Psoas muscle (tissue), 8 donors: ENCODE measurements at regions of chr17 and their contacts with region 1.

Region 1: GRCh38 chr17:69523244-69523861 is 108.9 kb downstream of the MAP2K6 start:
- DNase-seq: no peak
- ATAC-seq: peak; percentile 61 to 80 (median 68)
- H3K4me3 ChIP-seq: peak overlapping the region; percentile 3
- H3K27ac ChIP-seq: peak overlapping the region; percentile 77
- H3K4me1 ChIP-seq: peaks cover 17% of the 10 kb centered on the region
- H3K27me3 ChIP-seq: no peaks in the 10 kb centered on the region
- CTCF ChIP-seq: peak; percentile 79

Region 2: GRCh38 chr17:69327060-69327831 is 196.1 kb before region 1 on chr17 and contains the start of gene ABCA5:
- intact Hi-C with region 1: loop called in 1 of 2 experiments (anchors 5 kb)
- DNase-seq: peak; percentile 89 to 93
- ATAC-seq: peak; percentile 92 to 98 (median 96)
- H3K4me3 ChIP-seq: peak within 1 kb of the TSS; percentile 90
- H3K27ac ChIP-seq: peak within 1 kb of the TSS; percentile 97
- H3K4me1 ChIP-seq: peaks cover 27% of the 10 kb centered on the region
- H3K27me3 ChIP-seq: no peaks in the 10 kb centered on the region
- CTCF ChIP-seq: no peak
- total RNA-seq, gene ABCA5: 54.9 to 81.5 (median 75.0) TPM

Region 3: GRCh38 chr17:69335058-69335457 is 188.3 kb before region 1 on chr17:
- intact Hi-C with region 1: loop called in 1 of 2 experiments (anchors 1 kb)
- DNase-seq: no peak
- ATAC-seq: peak; percentile 78 to 90 (median 84)
- H3K4me3 ChIP-seq: peak overlapping the region; percentile 20
- H3K27ac ChIP-seq: peak overlapping the region; percentile 20
- H3K4me1 ChIP-seq: peaks cover under 1% of the 10 kb centered on the region
- H3K27me3 ChIP-seq: no peaks in the 10 kb centered on the region
- CTCF ChIP-seq: peak; percentile 76

Region 4: GRCh38 chr17:69430488-69430887 is 92.9 kb before region 1 on chr17:
- intact Hi-C with region 1: no loop called
- DNase-seq: no peak
- ATAC-seq: no peak
- H3K4me3 ChIP-seq: no peak overlapping the region
- H3K27ac ChIP-seq: peak overlapping the region; percentile 19
- H3K4me1 ChIP-seq: peaks cover 30% of the 10 kb centered on the region
- H3K27me3 ChIP-seq: no peaks in the 10 kb centered on the region
- CTCF ChIP-seq: no peak

Region 5: DNA sequence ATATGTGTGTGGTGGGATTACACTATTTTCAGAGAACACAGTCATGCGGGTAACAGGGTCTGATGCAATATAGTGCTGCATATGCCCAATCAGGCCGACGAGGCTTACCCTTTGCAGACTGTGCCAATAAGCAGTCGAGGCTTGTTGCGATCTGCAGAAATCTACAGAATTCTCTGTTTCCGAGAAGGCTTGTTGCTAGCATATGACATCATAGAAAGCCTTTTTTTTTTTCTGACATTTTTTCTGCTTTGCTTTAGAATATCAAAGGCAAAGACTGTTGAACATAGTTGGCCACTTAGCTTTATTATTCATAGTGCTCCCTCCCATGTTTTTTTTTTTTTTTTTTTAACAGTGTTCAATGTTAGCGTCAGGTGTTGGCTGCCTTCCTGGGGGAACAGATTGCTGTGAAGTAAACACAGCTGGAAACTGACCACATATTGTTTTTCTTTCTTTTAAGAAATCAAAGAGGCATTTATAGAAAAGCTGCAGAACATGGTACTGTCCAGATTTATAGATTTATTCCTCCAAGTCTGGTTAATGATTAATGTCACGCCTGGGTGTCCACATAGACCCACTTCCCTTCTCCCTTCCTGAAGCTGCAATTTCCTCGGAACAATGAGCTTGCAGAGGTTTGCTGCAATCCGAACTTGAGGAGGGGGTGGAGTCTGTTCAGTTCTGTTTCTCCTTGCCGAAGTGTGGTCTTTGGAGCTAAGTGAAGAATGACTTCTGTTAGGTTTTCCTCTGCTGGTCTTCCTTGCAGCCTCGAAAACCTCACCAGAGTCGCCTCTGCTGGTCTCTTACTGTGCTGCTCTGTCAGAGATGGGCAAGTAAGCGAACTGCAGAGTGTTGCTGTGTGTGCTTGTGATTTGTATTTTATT is 21.5 kb before region 1 on chr17:
- intact Hi-C with region 1: no loop called
- DNase-seq: peak in 1 of 2 donors; percentile 34
- ATAC-seq: peak; percentile 67 to 81 (median 75)
- H3K4me3 ChIP-seq: peak overlapping the region; percentile 64
- H3K27ac ChIP-seq: peak overlapping the region; percentile 87
- H3K4me1 ChIP-seq: peaks cover 68% of the 10 kb centered on the region
- H3K27me3 ChIP-seq: no peaks in the 10 kb centered on the region
- CTCF ChIP-seq: no peak

Region 6: GRCh38 chr17:70144260-70144846 is 621.0 kb after region 1 on chr17:
- intact Hi-C with region 1: loop called in 1 of 2 experiments (anchors 1 kb)
- DNase-seq: no peak
- ATAC-seq: peak in 1 of 4 donors; percentile 77
- H3K4me3 ChIP-seq: no peak overlapping the region
- H3K27ac ChIP-seq: no peak overlapping the region
- H3K4me1 ChIP-seq: no peaks in the 10 kb centered on the region
- H3K27me3 ChIP-seq: no peaks in the 10 kb centered on the region
- CTCF ChIP-seq: peak; percentile 82

Region 7: DNA sequence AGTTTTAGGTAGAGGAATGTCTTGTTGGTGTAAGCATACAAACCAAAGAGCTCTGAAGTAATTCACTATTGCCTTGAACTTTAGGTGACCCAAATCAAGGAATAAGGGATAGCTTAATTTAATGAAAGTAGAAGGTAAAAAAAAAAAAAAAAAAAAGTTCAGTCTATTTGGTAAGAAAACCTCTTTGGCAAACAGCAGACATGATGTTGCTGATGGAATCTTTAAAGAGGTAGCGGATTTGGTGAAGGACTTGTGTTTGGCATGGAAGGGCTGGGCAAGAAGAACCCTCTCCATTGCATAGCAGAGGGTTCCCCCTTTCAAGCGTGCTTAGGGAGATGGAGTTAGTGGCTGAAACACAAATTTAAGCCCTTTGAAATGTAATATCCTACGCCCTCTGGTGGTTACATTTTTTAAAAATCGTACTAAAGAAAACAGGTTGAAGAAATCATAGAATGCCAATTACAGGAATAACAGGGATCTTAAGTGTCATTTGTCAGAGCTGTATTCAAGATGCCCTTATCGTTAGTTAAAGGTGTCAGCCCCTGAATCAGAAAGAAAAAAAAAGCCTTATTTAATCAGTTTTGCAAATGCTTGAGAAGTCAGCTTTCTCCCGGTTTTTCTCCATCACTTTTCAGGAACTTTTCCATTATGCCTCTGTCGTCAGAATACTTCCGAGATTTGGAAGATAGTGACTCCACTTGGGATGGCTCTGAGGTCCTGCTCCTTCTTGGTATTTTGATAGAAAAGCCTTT is 1029.1 kb after region 1 on chr17:
- intact Hi-C with region 1: loop called in 1 of 2 experiments (anchors 5 kb)
- DNase-seq: no peak
- ATAC-seq: peak in 3 of 4 donors; percentile 47 to 75 (median 55)
- H3K4me3 ChIP-seq: no peak overlapping the region
- H3K27ac ChIP-seq: no peak overlapping the region
- H3K4me1 ChIP-seq: no peaks in the 10 kb centered on the region
- H3K27me3 ChIP-seq: no peaks in the 10 kb centered on the region
- CTCF ChIP-seq: peak; percentile 63

Region 8: GRCh38 chr17:70622368-70623260 is 1099.3 kb after region 1 on chr17:
- intact Hi-C with region 1: loop called in 1 of 2 experiments (anchors 1 kb)
- DNase-seq: peak; percentile 25 to 62
- ATAC-seq: peak; percentile 57 to 83 (median 68)
- H3K4me3 ChIP-seq: peak overlapping the region; percentile 24
- H3K27ac ChIP-seq: no peak overlapping the region
- H3K4me1 ChIP-seq: peaks cover 4% of the 10 kb centered on the region
- H3K27me3 ChIP-seq: no peaks in the 10 kb centered on the region
- CTCF ChIP-seq: peak; percentile 42